ENCODE measurements at regions of chr10 and their contacts with region 1.

Region 1: GRCh38 chr10:3095373-3096139 is 28.2 kb downstream of the PFKP start:
- DNase-seq: peak; percentile 98
- H3K4me3 ChIP-seq: peak overlapping the region; percentile 16
- CTCF ChIP-seq: no peak

Region 2: DNA sequence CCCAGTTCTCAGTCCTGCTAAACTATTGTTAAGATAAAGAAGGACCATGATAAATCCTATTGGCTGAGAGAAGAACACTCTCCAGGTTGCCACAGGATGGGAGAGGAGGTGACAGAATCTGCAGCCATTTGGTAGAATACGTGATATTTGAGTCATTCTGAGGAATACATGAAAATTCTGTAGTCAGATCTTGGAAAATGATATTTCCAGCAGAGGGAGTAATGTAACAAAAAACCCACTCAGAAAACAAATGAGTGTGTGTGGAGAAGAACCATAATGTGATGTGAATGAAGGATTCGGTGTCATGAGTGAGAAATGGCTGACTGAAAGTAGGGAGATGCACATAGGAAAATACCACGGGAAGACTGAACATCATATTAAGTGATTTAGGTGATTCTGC is 156.7 kb before region 1 on chr10:
- CTCF ChIA-PET with region 1: no interaction called
- POLR2A ChIA-PET with region 1: no interaction called
- DNase-seq: no peak
- H3K4me3 ChIP-seq: no peak overlapping the region
- CTCF ChIP-seq: no peak

Region 3: DNA sequence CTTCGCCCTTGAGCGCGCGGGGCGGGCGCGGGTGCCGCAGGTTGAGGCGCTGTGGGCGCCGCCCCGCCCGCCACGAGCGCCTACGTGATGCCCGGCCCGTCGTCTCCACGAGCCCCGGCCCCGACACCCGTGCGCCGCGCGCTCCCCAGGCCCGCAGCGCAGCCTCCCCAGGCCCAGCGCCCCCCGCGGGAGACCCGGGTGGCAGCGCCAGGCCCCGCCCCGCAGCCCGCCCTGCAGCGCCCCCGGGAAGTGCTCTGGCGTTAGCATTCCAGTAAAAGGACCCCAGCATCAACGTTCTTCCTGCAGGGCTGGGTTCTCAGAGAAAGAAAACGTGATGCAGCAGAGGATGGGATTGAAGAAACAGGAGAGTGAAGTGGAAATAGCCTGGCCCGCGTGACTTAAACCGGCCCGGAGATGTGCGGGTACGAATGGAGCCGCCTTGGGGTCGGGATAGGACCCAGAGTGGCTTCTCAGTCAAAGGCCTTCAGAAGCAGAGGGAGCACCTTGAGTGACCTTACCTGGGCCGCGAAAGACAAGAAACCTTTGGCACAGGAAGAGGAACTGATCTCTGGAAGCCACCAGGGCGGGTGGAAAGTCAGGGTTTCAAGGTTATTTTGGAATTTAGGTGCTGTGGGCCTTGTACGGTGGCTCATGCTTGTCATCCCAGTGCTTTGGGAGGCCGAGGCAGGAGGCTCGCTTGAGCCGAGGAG is 26.4 kb before region 1 on chr10:
- CTCF ChIA-PET with region 1: interaction called, 15 read pairs
- POLR2A ChIA-PET with region 1: interaction called, 20 read pairs
- DNase-seq: no peak
- H3K4me3 ChIP-seq: peak overlapping the region; percentile 77
- CTCF ChIP-seq: no peak

Region 4: DNA sequence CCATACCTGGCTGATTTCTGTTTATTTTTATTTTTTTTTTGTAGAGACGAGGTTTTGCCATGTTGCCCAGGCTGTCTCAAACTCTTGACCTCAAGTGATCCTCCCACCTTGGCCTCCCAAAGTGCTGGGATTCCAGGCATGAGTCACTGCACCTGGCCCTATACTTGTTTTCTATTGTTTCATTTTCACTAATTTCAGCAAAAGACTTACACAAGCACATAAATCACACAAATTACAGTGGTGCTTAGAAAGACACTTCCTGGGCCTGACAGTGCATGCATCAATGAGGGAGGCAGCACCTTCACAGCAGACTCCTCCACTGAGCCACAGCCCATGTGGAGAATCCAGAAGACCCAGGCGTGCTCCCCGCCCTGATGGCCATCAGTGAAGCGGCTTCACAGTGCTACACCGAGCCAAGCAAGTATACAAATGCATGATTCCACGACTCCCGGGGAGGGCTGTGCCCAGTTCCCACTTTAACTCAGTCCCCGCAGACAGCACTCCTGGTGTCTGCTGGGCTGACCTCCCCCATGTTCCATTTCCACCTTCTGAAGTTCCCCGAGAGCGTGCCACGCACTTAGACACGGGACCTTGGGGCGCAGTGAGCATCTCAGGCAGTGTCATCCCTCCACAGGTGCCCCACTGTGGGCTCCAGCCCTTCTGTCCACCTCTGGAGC is 56.5 kb after region 1 on chr10:
- CTCF ChIA-PET with region 1: no interaction called
- POLR2A ChIA-PET with region 1: no interaction called
- DNase-seq: no peak
- H3K4me3 ChIP-seq: no peak overlapping the region
- CTCF ChIP-seq: no peak

Measured in AG04449 (cell line).